GM10248 (cell line): ENCODE measurements at regions of chr3 and their contacts with region 1.

Region 1: GRCh38 chr3:184229394-184230080 is at the start of gene VWA5B2:
- DNase-seq: peak; percentile 90
- CTCF ChIP-seq: no peak

Region 2: GRCh38 chr3:184160456-184160855 is 69.1 kb before region 1 on chr3:
- CTCF ChIA-PET with region 1: interaction called, 11 read pairs
- POLR2A ChIA-PET with region 1: no interaction called
- DNase-seq: peak; percentile 52
- CTCF ChIP-seq: no peak

Region 3: DNA sequence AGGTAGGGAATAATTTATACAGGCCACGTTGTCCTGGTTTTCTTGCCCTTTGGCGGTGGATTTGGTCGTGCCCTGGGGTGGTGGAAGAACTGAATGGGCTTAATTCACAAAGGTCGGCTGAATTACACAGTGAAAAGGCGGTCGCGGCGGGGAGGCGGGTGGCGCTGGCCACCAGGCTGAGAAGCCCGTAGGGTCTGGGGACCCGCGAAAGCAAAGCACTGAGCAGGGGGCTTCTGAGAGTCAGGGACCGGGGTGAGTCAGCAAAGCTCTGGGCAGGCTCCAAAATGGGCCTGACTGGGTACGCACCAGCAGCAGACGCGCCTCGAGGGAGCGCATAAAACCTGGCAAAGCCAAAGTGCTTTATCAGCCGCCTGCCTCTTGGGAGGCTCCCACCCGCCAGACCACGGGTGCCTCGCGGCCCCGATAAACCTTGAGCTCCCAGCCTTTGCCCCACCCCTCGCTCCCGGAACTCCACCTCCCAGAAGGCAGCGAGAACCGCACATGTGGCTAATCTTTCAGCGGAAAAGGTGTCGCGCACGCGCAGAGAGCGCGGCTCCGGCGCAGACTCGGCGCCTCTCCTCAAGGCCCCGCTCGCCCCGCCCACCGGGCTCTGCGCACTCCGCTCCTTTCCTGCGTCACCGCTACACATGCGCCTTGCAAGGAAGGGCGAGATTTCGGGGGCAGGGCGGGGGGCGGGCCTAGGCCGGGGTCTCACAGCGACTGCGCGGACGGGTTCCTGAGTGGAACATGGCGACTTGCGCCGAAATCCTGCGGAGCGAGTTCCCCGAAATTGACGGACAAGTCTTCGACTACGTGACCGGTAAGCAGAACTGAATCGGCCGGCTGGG is 43.9 kb before region 1 on chr3 and contains the start of gene ABCF3:
- CTCF ChIA-PET with region 1: interaction called, 13 read pairs
- POLR2A ChIA-PET with region 1: no interaction called
- DNase-seq: peak; percentile 100
- CTCF ChIP-seq: no peak

Region 4: DNA sequence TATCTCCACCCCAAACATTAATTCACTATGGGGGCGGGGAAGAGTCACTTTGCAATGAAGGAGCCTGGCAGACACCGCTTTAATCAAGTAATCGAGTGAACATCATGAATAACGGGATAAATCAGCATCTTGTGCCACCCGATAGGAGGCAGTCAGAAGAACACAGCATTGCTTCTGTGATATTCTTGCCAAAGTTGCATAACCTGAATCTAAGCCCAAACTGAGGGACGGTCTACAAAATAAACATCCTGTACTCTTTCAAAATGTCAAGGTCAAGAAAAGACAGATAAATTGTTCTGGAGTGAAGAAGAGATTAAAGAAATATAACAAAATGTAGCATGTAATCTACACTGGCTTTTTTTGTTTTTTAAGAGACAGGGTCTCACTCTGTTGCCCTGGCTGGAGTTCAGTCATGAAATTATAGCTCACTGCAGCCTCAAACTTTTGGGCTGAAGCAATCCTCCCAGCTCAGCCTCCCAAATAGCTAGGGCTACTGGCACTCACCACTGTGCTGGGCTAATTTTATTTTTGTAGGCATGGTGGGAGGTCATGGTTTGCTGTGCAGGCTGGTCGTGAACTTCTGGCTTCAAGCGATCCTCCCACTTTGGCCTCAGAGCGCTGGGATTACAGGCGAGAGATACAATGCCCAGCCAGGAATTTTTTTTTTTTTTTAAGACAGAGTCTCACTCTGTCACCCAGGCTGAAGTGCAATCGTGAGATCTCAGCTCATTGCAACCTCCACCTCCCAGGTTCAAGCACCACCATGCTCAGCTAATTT is 20.2 kb before region 1 on chr3:
- CTCF ChIA-PET with region 1: interaction called, 160 read pairs
- POLR2A ChIA-PET with region 1: no interaction called
- DNase-seq: no peak
- CTCF ChIP-seq: no peak

Region 5: DNA sequence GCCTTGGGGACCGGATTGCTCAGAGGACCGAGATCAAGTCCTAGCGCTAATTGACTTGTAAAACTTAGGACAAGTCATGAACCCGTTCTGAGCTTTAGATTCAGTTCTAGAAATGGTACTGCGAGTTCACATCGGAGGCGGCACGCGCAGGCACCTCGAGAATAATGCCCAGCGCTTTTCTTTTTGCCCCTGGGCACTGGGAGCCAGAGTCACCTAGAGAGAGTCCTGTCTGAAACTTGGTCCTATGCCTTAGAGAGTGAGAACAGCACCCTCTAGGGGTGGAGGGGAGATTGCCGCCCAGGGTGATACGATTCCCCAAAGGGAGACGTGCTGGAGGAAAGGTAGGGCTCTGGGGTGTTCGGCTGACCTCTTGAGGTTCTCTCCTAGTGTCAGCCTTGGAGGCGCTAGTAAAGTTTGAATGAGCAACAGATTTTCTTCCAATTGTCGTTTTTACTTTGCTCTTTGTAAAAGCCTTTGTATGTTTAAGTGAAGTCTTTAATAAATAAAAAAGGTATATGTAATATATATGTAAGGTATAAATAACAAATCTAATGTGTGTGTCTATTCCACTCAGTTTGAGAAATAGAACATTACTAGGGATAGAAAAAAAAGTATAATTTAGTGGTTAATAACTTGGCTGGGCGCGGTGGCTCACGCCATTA is 20.8 kb after region 1 on chr3:
- CTCF ChIA-PET with region 1: interaction called, 70 read pairs
- POLR2A ChIA-PET with region 1: no interaction called
- DNase-seq: peak; percentile 91
- CTCF ChIP-seq: peak; percentile 95

Region 6: GRCh38 chr3:184295771-184296170 is 66.2 kb after region 1 on chr3:
- CTCF ChIA-PET with region 1: interaction called, 11 read pairs
- POLR2A ChIA-PET with region 1: no interaction called
- DNase-seq: no peak
- CTCF ChIP-seq: no peak